Cardiac septum (tissue), 1 donor: ENCODE measurements at regions of chr16 and their contacts with region 1.

Region 1: GRCh38 chr16:68848786-68849185 is 5.5 kb downstream of the TANGO6 start:
- DNase-seq: no peak

Region 2: DNA sequence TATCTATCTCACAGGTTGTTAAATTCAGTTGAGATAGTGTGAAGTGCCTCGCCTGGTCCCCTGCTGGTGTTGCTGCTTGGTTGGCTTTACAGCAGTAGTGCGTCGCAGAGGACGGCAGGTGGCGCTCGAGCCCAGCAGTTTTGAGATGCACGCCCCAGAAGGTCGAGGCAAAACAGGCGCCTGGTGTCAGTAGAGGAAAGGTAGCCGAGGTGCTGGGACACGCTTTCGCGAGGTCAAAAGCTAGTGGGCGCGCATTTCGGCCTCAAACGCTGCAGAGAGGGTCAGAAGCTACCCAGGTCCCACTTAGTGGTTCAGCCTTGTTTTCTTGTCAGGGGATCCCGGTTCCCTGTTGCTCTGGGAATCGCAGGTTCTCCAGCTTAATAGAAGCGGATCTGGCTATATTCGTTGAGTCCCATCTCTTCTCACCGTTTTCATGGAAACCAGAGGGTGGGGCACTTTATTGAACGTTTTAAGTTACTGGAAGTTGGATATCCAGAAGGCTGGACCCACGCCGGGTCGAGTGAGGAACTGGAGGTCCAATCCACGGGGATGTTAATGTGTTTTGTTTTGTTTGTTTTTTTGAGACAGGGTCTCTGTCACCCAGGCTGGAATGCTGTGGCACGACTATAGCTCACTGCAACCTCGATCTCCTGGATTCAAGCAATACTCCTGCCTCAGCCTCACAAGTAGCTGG is 320.0 kb before region 1 on chr16:
- intact Hi-C with region 1: loop called (anchors 5 kb)
- DNase-seq: peak; percentile 94

Region 3: DNA sequence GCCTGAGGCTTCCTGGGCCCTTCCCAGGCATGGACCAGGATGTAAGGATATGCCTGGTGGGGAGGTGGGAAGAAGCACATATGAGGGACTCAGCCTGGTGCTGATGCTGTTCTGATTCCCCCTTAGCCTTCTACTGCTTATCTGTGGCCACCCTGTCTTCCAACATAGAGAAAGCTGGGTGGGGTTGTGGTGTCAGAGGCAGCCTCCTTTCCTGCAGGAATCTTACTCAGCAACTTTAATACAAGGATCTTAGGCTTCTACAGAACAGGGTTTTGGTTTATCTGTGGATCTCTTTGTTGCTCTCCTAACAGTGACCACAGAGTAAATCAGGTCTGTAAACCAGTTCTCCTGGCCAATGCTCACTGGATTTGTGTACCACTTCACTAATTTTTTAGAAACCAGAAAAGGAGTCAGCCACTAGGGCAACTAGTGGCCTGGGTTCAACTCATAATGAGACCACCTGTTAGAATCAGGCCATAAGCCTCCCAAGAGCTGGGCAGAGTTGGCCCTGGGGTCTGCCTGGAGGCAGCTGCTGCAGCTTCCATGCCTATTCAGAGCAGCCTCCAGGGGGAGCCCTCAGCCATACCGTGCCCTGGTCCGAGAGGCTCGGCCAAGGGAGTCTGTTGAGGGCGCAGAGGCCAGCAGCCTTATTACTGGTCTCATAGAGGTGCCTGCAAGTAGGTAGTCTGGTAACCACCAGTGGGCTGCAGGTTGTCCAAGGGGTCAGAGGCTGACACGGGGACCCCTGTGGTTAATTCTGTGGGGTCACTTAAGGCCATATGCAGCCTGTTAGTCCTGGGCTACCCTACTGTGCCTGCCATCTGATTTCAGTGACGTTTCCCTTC is 263.7 kb after region 1 on chr16:
- intact Hi-C with region 1: loop called (anchors 5 kb)
- DNase-seq: peak; percentile 74